Activated T-helper 1 cell treated with anti-CD3 and anti-CD28 coated beads, Interleukin-12 subunit alpha, Interleukin-12 subunit beta, Interleukin-2, Interleukin-4 antibody, amounts not matched to agents 30 ng/mL and 10 ng/mL and 1 ng/mL, durations not matched to agents 14 hours and 24 hours and 36 hours (primary cell): ENCODE measurements at regions of chr1 and their contacts with region 1.

Region 1: GRCh38 chr1:149927503-149928387 is at the start of gene SF3B4:
- DNase-seq: peak; percentile 95
- H3K4me3 Mint-ChIP-seq: peak within 1 kb of the TSS; percentile 100
- H3K27ac Mint-ChIP-seq: peak within 1 kb of the TSS; percentile 96
- H3K4me1 Mint-ChIP-seq: peaks cover 81% of the 10 kb centered on the region
- H3K27me3 Mint-ChIP-seq: no peaks in the 10 kb centered on the region
- total RNA-seq, gene SF3B4: 125 and 136 TPM in 2 replicates

Region 2: DNA sequence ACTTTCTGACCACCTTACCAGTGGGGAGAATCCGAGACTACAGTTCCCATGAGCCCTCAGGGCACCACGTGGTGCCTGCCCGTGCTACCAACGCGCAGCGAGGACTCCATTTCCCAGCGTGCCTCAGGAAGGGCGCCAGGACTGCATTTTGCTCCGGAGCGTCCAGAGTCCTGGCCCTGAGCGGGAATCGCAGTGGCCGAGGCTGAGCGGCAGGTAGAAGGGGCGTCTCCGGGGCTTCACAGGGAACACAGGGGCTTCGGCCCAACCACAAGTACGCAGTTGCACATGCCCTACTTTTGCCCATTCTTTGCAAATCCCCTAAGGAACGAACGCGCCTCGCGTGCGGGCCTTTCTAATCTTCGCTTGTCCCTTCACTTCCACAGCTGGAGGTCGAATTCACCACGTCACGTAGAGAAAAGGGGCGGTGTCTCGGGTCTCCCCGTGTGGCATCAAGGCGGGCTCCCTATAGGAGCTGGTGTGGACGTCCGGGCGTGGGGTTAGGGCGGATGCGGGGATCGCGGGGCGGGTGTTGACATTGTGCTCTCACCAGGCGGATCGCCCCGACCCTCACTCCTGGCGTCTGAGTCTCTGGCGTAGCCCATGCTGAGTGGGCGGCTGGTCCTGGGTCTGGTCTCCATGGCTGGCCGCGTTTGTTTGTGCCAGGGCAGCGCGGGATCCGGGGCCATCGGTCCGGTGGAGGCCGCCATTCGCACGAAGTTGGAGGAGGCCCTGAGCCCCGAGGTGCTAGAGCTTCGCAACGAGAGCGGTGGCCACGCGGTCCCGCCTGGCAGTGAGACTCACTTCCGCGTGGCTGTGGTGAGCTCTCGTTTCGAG is 28.1 kb before region 1 on chr1 and contains the start of gene BOLA1:
- intact Hi-C with region 1: loop called (anchors 1 kb)
- DNase-seq: peak; percentile 77
- H3K4me3 Mint-ChIP-seq: peak within 1 kb of the TSS; percentile 86
- H3K27ac Mint-ChIP-seq: peak within 1 kb of the TSS; percentile 92
- H3K4me1 Mint-ChIP-seq: peaks cover 27% of the 10 kb centered on the region
- H3K27me3 Mint-ChIP-seq: peaks cover 2% of the 10 kb centered on the region
- total RNA-seq, gene BOLA1: 23.9 and 24.3 TPM in 2 replicates

Region 3: GRCh38 chr1:149962123-149962548 is 34.4 kb after region 1 on chr1:
- intact Hi-C with region 1: loop called (anchors 2 kb)
- DNase-seq: peak; percentile 29
- H3K4me3 Mint-ChIP-seq: no peak overlapping the region
- H3K27ac Mint-ChIP-seq: peak overlapping the region; percentile 11
- H3K4me1 Mint-ChIP-seq: peaks cover 21% of the 10 kb centered on the region
- H3K27me3 Mint-ChIP-seq: no peaks in the 10 kb centered on the region

Region 4: GRCh38 chr1:150010393-150011115 is 82.8 kb after region 1 on chr1 and contains the start of gene OTUD7B:
- intact Hi-C with region 1: loop called (anchors 2 kb)
- DNase-seq: peak; percentile 72
- H3K4me3 Mint-ChIP-seq: peak within 1 kb of the TSS; percentile 99
- H3K27ac Mint-ChIP-seq: peak within 1 kb of the TSS; percentile 98
- H3K4me1 Mint-ChIP-seq: peaks cover 35% of the 10 kb centered on the region
- H3K27me3 Mint-ChIP-seq: peaks cover 4% of the 10 kb centered on the region
- total RNA-seq, gene OTUD7B: 41.1 and 41.8 TPM in 2 replicates

Region 5: GRCh38 chr1:150149271-150150132 is 221.8 kb after region 1 on chr1 and contains the start of gene PLEKHO1:
- intact Hi-C with region 1: loop called (anchors 5 kb)
- DNase-seq: peak; percentile 68
- H3K4me3 Mint-ChIP-seq: peak within 1 kb of the TSS; percentile 87
- H3K27ac Mint-ChIP-seq: peak within 1 kb of the TSS; percentile 79
- H3K4me1 Mint-ChIP-seq: peaks cover 47% of the 10 kb centered on the region
- H3K27me3 Mint-ChIP-seq: peaks cover 24% of the 10 kb centered on the region
- total RNA-seq, gene PLEKHO1: 27.1 and 35.4 TPM in 2 replicates